Caco-2 (cell line): ENCODE measurements at regions of chr6 and their contacts with region 1.

Region 1: DNA sequence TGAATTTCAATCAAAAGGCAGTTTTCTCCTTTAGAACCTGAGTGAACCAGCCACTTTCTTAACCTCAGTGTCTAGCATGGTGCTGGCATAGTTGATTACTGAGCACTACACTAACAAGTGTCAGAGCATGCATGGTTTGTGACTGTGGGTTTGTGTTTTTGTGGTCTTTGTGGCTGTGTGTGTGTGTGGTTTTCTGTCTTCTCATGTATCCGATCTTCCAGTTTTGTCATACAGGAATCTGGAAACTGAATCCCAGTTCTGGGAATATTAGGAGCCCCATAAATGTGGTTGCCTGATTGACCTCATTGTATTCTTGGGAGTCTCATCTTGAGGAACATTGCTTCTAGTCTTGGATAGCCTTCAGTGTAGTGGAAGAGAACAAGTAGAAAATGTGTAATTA is 73.7 kb downstream of the ESR1 start:
- DNase-seq: no peak
- H3K4me3 ChIP-seq: no peak overlapping the region
- H3K4me3 Mint-ChIP-seq: no peak overlapping the region
- H3K27ac Mint-ChIP-seq: no peak overlapping the region
- H3K4me1 ChIP-seq: no peaks in the 10 kb centered on the region
- H3K4me1 Mint-ChIP-seq: no peaks in the 10 kb centered on the region
- H3K27me3 ChIP-seq: no peaks in the 10 kb centered on the region
- H3K27me3 Mint-ChIP-seq: peaks cover 6% of the 10 kb centered on the region
- CTCF ChIP-seq: no peak

Region 2: DNA sequence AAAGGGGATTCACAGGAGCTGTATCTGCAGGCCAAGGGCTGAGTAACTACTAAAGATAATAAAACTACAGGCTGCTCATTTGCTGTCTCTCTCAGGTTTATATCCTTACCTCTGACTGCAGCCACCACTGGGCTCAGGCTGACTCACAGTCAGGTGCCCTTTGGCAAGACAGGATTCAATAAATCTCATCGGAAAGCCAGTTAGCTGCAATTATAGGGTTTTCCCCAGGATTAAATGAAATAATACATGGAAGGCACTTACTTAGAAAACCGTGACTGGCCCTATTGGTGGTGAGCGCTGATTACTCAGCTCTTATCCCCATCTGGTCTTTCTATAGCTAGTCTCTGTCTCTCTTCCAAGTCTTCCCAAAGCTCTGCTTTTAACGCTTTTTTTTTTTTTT is 455.7 kb before region 1 on chr6:
- CTCF ChIA-PET with region 1: no interaction called
- POLR2A ChIA-PET with region 1: no interaction called
- intact Hi-C with region 1: loop called (anchors 5 kb)
- DNase-seq: no peak
- H3K4me3 ChIP-seq: no peak overlapping the region
- H3K4me3 Mint-ChIP-seq: no peak overlapping the region
- H3K27ac Mint-ChIP-seq: no peak overlapping the region
- H3K4me1 ChIP-seq: no peaks in the 10 kb centered on the region
- H3K4me1 Mint-ChIP-seq: no peaks in the 10 kb centered on the region
- H3K27me3 ChIP-seq: no peaks in the 10 kb centered on the region
- H3K27me3 Mint-ChIP-seq: no peaks in the 10 kb centered on the region
- CTCF ChIP-seq: no peak

Region 3: GRCh38 chr6:151916680-151917164 is 35.5 kb after region 1 on chr6:
- CTCF ChIA-PET with region 1: no interaction called
- POLR2A ChIA-PET with region 1: no interaction called
- intact Hi-C with region 1: no loop called
- DNase-seq: no peak
- H3K4me3 ChIP-seq: no peak overlapping the region
- H3K4me3 Mint-ChIP-seq: no peak overlapping the region
- H3K27ac Mint-ChIP-seq: no peak overlapping the region
- H3K4me1 ChIP-seq: no peaks in the 10 kb centered on the region
- H3K4me1 Mint-ChIP-seq: no peaks in the 10 kb centered on the region
- H3K27me3 ChIP-seq: no peaks in the 10 kb centered on the region
- H3K27me3 Mint-ChIP-seq: no peaks in the 10 kb centered on the region
- CTCF ChIP-seq: no peak

Region 4: GRCh38 chr6:152170705-152171667 is 289.8 kb after region 1 on chr6:
- CTCF ChIA-PET with region 1: no interaction called
- POLR2A ChIA-PET with region 1: no interaction called
- intact Hi-C with region 1: no loop called
- DNase-seq: no peak
- H3K4me3 ChIP-seq: no peak overlapping the region
- H3K4me3 Mint-ChIP-seq: no peak overlapping the region
- H3K27ac Mint-ChIP-seq: no peak overlapping the region
- H3K4me1 ChIP-seq: no peaks in the 10 kb centered on the region
- H3K4me1 Mint-ChIP-seq: peaks cover 9% of the 10 kb centered on the region
- H3K27me3 ChIP-seq: no peaks in the 10 kb centered on the region
- H3K27me3 Mint-ChIP-seq: no peaks in the 10 kb centered on the region
- CTCF ChIP-seq: no peak